ENCODE measurements at regions of chr15 and their contacts with region 1.

Region 1: DNA sequence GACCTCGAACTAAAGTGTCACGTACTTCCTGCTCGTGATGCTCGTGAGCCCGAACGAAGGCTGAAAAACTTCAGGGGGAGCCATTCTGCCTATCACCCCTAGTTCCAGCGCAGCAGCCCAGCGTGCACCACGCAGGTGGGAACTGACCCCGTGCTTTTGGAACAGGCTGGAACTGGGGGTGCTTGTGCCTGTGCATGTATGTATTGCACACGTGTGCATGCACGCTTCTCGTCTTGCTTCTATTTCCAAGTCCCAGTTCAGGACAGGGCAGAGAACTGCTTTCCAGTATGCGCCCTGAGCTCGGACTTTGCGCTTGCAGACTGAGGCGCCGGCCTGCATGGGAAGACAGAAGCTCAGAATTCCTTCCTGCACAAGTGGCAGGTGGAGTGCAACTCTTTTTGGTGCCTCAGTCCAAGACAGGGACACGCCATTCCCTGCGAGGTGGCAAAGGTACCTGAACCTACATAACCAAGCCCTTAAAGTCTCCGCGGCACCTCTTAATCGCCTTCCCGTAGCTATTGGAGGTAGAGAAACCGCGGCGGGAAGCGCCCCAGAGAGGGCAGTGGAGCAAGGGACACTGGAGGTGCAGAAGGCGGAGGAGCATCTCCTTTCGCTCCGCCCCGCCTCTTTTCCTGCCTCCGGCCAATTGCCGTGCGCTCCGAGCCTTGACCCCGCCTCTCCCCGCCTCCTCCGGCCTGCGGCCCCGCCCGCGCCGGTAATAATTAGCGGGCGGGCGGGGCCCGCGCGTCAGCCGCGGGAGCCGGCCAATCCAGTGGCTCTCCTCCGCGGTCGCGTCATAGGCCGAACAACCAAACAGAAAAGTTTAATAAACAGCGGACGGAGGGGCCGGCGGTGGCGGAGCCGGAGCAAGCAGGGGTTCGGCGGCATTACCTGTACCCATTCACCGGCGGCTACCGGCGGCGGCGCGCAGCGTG is at the start of gene ZFAND6:
- DNase-seq: peak; percentile 90 to 94
- ATAC-seq: peak; percentile 92 to 94
- H3K4me3 ChIP-seq: peak within 1 kb of the TSS; percentile 66 to 90 (median 78)
- H3K27ac ChIP-seq: peak within 1 kb of the TSS; percentile 84 to 95 (median 93)
- H3K4me1 ChIP-seq: peaks cover 29 to 30% of the 10 kb centered on the region in 2 donors
- H3K27me3 ChIP-seq: no peaks in the 10 kb centered on the region
- CTCF ChIP-seq: peak in 2 of 5 experiments; percentile 24 to 25
- POLR2A ChIP-seq: peak; percentile 88 to 97
- total RNA-seq, gene ZFAND6: 95.4 to 196 (median 146) TPM

Region 2: DNA sequence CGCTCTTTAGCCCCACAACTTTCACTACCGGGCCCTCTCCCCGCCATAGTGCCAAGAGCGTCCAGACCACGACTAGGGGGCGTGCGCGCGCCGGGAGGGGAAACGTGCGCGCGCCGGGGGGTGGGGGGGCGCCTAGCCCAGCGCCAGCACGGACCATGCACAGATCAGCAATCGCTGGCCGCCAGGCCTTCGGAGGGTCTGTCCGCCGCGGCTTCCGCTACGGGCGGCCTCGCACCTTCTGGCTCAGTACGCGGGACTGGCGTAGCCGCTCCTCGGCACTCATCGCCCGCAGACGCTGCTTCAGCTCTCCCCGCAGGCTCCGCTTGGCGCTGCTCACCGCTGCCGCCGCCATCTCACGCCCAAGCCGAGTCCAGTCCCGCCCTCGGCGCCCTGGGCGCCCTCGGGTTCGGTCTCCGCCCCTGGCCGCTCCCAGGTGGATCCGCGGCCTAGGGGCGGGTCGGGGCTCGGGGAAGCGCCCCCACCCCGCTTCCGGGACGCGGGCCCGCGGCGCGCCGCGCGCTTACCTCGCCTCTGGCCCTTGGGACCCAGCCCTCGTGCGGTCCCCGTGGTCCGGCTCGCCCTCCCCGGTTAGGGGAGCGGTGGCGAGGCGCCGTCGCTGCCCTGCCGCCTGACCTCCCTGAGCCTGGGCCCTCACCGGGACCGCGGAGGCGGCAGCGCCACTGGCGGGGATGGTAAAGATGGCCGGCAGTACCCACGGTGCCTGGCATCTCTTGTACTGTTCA is 162.3 kb before region 1 on chr15 and contains the start of gene MTHFS:
- in situ Hi-C with region 1: no loop called
- intact Hi-C with region 1: loop called (anchors 5 kb)
- DNase-seq: peak; percentile 30 to 65
- ATAC-seq: peak; percentile 87 to 89
- H3K4me3 ChIP-seq: peak within 1 kb of the TSS; percentile 71 to 94 (median 84)
- H3K27ac ChIP-seq: peak within 1 kb of the TSS; percentile 85 to 92 (median 90)
- H3K4me1 ChIP-seq: peaks cover 5 to 10% of the 10 kb centered on the region in 2 donors
- H3K27me3 ChIP-seq: no peaks in the 10 kb centered on the region
- CTCF ChIP-seq: peak in 2 of 5 experiments; percentile 42 to 66
- POLR2A ChIP-seq: peak; percentile 40 to 66
- total RNA-seq, gene MTHFS: 7.0 to 16.7 (median 14.6) TPM

Region 3: GRCh38 chr15:80072285-80072994 is 13.3 kb after region 1 on chr15:
- in situ Hi-C with region 1: no loop called
- intact Hi-C with region 1: loop called (anchors 2 kb)
- DNase-seq: no peak
- ATAC-seq: peak; percentile 97 to 100
- H3K4me3 ChIP-seq: peak overlapping the region; percentile 23 to 44 (median 42)
- H3K27ac ChIP-seq: peak overlapping the region; percentile 15 to 59 (median 34)
- H3K4me1 ChIP-seq: peaks cover 67 to 75% of the 10 kb centered on the region in 2 donors
- H3K27me3 ChIP-seq: no peaks in the 10 kb centered on the region
- CTCF ChIP-seq: no peak
- POLR2A ChIP-seq: no peak

Region 4: GRCh38 chr15:80141916-80142598 is 82.9 kb after region 1 on chr15:
- in situ Hi-C with region 1: loop called in 1 of 4 experiments (anchors 10 kb)
- intact Hi-C with region 1: no loop called
- DNase-seq: no peak
- ATAC-seq: no peak
- H3K4me3 ChIP-seq: no peak overlapping the region
- H3K27ac ChIP-seq: no peak overlapping the region
- H3K4me1 ChIP-seq: no peaks in the 10 kb centered on the region
- H3K27me3 ChIP-seq: no peaks in the 10 kb centered on the region
- CTCF ChIP-seq: no peak
- POLR2A ChIP-seq: no peak

Region 5: GRCh38 chr15:80173022-80173759 is 114.1 kb after region 1 on chr15:
- in situ Hi-C with region 1: loop called in 1 of 4 experiments (anchors 25 kb)
- intact Hi-C with region 1: loop called (anchors 1 kb)
- DNase-seq: peak; percentile 67 to 87
- ATAC-seq: peak; percentile 57 to 59
- H3K4me3 ChIP-seq: no peak overlapping the region
- H3K27ac ChIP-seq: peak overlapping the region; percentile 79 to 95 (median 92)
- H3K4me1 ChIP-seq: peaks cover 23 to 25% of the 10 kb centered on the region in 2 donors
- H3K27me3 ChIP-seq: no peaks in the 10 kb centered on the region
- CTCF ChIP-seq: peak; percentile 69 to 84 (median 78)
- POLR2A ChIP-seq: no peak

Measured in gastrocnemius medialis (tissue), 4 donors.